ENCODE measurements at regions of chr6 and their contacts with region 1.

Region 1: DNA sequence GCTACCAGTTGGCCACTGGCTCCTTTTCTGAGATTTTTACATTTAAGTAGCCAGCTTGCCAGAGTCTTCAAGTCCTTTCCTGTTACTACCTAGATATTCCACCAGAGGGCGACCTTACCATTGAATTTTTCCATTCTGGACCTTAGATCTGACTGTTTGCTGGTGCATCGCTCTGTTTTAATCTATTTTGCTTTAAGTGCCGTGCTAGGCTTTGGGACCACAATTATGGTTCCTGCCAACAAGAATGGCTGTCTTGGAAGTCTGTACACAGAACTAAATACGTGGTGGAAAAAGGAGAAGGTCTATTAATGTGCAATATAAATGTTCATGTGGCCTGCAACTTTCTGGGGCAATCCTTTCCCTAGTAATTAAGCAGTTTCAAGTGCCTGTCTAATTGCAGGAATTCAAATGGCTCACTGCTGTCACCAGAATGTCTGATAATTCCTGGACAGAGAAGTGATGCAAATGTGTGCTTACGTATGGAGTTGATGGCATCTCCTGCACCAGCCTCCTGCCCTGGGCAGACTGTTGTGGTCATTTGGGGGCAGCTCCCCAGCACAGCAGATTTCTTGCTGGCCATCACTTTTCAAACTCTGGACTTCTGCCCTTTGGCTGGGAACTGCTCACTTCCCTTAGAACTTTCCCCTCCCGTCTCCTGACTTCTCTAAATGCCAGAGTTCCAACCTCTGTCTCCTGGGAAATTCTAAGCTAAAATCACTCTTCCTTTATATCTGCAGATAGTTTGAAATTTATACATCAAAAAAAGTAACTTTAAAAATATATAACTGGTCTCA is 5.6 kb upstream of the HLA-DOA start:
- DNase-seq: peak in 2 of 4 donors; percentile 72 to 84
- ATAC-seq: peak; percentile 60
- H3K4me3 ChIP-seq: no peak overlapping the region
- H3K27ac ChIP-seq: no peak overlapping the region
- H3K4me1 ChIP-seq: peaks cover 19 to 39% of the 10 kb centered on the region in 2 donors
- H3K27me3 ChIP-seq: no peaks in the 10 kb centered on the region
- CTCF ChIP-seq: peak; percentile 60 to 90

Region 2: GRCh38 chr6:32271429-32271828 is 743.6 kb before region 1 on chr6:
- intact Hi-C with region 1: no loop called
- DNase-seq: no peak
- ATAC-seq: no peak
- H3K4me3 ChIP-seq: no peak overlapping the region
- H3K27ac ChIP-seq: no peak overlapping the region
- H3K4me1 ChIP-seq: no peaks in the 10 kb centered on the region
- H3K27me3 ChIP-seq: no peaks in the 10 kb centered on the region
- CTCF ChIP-seq: no peak

Region 3: GRCh38 chr6:33075568-33076405 is 60.7 kb after region 1 on chr6 and contains the start of gene HLA-DPB1:
- intact Hi-C with region 1: loop called in 1 of 2 experiments (anchors 5 kb)
- DNase-seq: peak in 2 of 4 donors; percentile 15 to 33
- ATAC-seq: peak; percentile 92
- H3K4me3 ChIP-seq: peak within 1 kb of the TSS; percentile 26 to 49
- H3K27ac ChIP-seq: peak within 1 kb of the TSS; percentile 66 to 83
- H3K4me1 ChIP-seq: peaks cover 0 to 56% of the 10 kb centered on the region in 2 donors
- H3K27me3 ChIP-seq: no peaks in the 10 kb centered on the region
- CTCF ChIP-seq: no peak
- polyA plus RNA-seq, gene HLA-DPB1: 15.2 to 30.3 (median 24.1) TPM

Region 4: DNA sequence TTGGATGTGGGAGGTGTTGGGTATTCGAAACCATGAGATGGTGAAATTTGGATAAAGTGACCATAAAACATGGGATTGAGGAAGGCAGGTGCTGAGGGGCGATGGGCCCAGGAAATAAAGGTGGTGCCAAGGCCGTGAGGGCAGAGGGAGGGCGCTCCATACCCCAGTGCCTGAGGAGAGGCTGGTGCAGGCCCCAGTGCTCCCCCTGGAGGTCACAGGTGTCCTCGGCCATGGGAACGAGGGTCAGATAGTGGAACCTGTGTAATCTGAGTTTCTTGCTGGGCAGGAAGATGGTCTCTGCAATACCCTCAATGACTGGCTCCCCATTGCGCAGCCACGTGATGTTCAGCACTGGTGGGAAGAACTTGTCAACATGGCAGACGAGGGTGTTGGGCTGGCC is 76.9 kb after region 1 on chr6:
- intact Hi-C with region 1: loop called in 1 of 2 experiments (anchors 5 kb)
- DNase-seq: peak in 1 of 4 donors; percentile 80
- ATAC-seq: peak; percentile 86
- H3K4me3 ChIP-seq: no peak overlapping the region
- H3K27ac ChIP-seq: no peak overlapping the region
- H3K4me1 ChIP-seq: no peaks in the 10 kb centered on the region
- H3K27me3 ChIP-seq: peaks cover 0 to 9% of the 10 kb centered on the region in 2 donors
- CTCF ChIP-seq: peak; percentile 53 to 73

Region 5: DNA sequence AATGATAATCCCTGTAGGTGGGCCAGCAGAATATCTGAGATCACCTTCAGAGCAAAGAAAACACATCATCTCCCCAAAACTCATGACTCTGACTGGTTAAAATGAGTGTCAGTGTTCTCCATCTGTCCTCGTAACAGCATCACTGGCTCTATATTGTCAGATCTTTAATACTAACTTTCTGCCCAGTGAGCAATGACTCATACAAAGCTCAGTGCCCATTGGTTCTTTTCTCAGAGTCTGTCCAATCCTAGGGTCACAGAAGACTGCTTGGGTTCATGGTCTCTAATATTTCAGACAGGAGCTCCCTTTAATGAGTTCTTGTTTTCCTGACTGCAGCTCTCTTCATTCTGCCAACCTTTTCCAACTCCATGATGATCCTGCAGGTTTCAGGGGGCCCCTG is 97.1 kb after region 1 on chr6:
- intact Hi-C with region 1: no loop called
- DNase-seq: peak in 2 of 4 donors; percentile 30 to 54
- ATAC-seq: peak; percentile 98
- H3K4me3 ChIP-seq: no peak overlapping the region
- H3K27ac ChIP-seq: no peak overlapping the region
- H3K4me1 ChIP-seq: peaks cover 0 to 9% of the 10 kb centered on the region in 2 donors
- H3K27me3 ChIP-seq: peaks cover 11 to 54% of the 10 kb centered on the region in 2 donors
- CTCF ChIP-seq: no peak